ENCODE measurements at regions of chr21 and their contacts with region 1.

Region 1: GRCh38 chr21:45709173-45709572 is 65.6 kb downstream of the PCBP3 start:
- DNase-seq: no peak
- H3K4me3 Mint-ChIP-seq: no peak overlapping the region
- H3K27ac Mint-ChIP-seq: no peak overlapping the region
- H3K4me1 Mint-ChIP-seq: peaks cover 5% of the 10 kb centered on the region
- H3K27me3 Mint-ChIP-seq: no peaks in the 10 kb centered on the region
- CTCF ChIP-seq: no peak

Region 2: DNA sequence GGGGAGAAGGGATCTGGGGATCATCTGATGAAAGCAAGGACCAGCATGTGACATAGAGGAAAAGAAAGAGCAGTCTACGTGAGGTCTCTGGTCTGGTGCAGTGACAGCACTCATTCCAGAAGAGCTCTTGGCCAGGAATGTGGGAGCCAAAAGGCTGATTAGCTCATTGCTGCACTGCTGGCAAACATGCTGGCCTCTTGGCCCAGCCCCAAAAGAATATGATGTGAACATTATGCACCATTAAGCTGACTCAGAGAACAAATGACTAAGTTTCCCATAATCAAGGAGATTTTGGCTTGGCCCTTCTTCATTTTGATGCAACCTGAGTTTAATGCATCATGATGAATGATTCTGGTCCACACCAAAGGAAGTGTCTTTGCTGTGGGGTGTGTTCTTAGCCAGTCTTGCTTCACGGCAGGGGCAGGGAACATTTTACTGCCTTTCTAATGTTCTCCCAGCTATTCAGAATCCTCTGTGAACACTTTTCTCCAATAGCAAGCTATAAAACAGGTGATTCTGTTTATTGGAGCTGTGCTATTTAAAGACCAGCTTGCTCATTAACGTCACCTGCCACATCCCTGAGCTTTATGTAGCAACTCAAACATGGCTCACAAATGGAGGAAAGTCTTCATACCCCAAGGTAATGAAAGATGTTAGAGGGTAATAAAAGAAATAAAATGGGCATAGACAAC is 10.5 kb before region 1 on chr21:
- CTCF ChIA-PET with region 1: no interaction called
- POLR2A ChIA-PET with region 1: interaction called, 12 read pairs
- intact Hi-C with region 1: no loop called
- DNase-seq: peak; percentile 99
- H3K4me3 Mint-ChIP-seq: no peak overlapping the region
- H3K27ac Mint-ChIP-seq: peak overlapping the region; percentile 32
- H3K4me1 Mint-ChIP-seq: peaks cover 20% of the 10 kb centered on the region
- H3K27me3 Mint-ChIP-seq: no peaks in the 10 kb centered on the region
- CTCF ChIP-seq: no peak

Region 3: DNA sequence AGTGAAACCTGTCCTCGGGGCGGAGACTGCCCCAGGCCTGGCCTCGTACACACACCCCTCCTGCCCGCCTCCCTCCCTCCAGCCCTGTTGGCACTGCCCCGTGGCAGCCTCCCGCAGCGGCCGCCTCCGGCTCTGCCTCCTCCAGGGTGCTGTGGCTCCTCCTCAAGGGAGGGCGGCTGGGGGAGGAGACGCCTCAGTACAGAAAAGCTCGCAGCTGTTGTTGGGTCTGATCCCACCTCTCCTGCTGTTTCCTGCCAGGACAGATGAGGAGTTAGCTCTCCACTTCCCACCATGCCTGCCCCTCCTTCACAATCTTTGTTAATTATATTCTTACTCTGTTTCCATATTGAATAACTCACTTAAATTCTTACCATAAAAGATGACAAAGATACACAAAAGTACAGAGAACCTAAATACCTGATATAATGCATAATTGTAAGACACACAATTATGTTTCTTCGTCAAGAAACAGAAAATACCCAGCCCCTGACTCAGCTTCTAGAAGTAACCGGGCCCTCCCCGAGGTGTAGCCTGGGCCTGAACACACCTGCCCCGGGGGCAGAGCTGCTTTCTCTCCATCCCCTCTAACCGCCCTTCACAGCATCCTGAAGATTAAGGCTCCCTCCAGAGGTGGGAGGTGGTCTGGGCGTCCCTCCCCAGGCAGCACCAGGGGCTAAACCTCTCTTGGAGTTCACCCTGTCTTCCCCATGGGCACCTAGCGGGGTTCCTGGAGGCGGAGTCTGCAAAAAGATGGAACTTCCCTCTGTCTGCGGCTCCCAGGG is 241.8 kb after region 1 on chr21:
- CTCF ChIA-PET with region 1: no interaction called
- POLR2A ChIA-PET with region 1: no interaction called
- intact Hi-C with region 1: no loop called
- DNase-seq: peak; percentile 64
- H3K4me3 Mint-ChIP-seq: peak overlapping the region; percentile 30
- H3K27ac Mint-ChIP-seq: no peak overlapping the region
- H3K4me1 Mint-ChIP-seq: peaks cover 11% of the 10 kb centered on the region
- H3K27me3 Mint-ChIP-seq: peaks cover 37% of the 10 kb centered on the region
- CTCF ChIP-seq: no peak

Region 4: DNA sequence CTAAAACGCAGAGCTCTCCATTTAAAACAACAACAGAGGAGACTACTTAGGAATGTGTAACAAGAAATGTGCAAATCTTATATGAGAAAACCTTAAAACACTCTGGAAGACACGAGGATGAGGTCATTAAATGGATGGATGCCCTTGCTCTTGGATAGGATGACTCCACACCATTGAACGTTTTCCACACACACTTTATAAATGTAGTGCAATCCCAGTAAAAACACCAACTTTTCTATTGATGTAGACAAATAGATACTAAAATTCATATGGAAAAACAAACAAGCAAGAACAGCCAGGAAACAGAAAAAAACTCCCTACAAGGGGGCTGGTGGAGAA is 254.0 kb after region 1 on chr21:
- CTCF ChIA-PET with region 1: no interaction called
- POLR2A ChIA-PET with region 1: no interaction called
- intact Hi-C with region 1: no loop called
- DNase-seq: no peak
- H3K4me3 Mint-ChIP-seq: no peak overlapping the region
- H3K27ac Mint-ChIP-seq: no peak overlapping the region
- H3K4me1 Mint-ChIP-seq: peaks cover 2% of the 10 kb centered on the region
- H3K27me3 Mint-ChIP-seq: peaks cover 26% of the 10 kb centered on the region
- CTCF ChIP-seq: no peak

Measured in MCF 10A (cell line).